Common myeloid progenitor, CD34-positive (primary cell): ENCODE measurements at regions of chr12 and their contacts with region 1.

Region 1: GRCh38 chr12:48890657-48891418 is 25.2 kb upstream of the RND1 start:
- DNase-seq: peak; percentile 60 to 73 (median 67)
- H3K4me3 ChIP-seq: peak overlapping the region in 2 of 7 experiments; percentile 22 to 50
- H3K27ac ChIP-seq: no peak overlapping the region
- H3K4me1 ChIP-seq: peaks cover 0 to 7% (median 2%) of the 10 kb centered on the region in 4 experiments
- H3K27me3 ChIP-seq: peaks cover 3 to 18% (median 5%) of the 10 kb centered on the region in 5 experiments

Region 2: DNA sequence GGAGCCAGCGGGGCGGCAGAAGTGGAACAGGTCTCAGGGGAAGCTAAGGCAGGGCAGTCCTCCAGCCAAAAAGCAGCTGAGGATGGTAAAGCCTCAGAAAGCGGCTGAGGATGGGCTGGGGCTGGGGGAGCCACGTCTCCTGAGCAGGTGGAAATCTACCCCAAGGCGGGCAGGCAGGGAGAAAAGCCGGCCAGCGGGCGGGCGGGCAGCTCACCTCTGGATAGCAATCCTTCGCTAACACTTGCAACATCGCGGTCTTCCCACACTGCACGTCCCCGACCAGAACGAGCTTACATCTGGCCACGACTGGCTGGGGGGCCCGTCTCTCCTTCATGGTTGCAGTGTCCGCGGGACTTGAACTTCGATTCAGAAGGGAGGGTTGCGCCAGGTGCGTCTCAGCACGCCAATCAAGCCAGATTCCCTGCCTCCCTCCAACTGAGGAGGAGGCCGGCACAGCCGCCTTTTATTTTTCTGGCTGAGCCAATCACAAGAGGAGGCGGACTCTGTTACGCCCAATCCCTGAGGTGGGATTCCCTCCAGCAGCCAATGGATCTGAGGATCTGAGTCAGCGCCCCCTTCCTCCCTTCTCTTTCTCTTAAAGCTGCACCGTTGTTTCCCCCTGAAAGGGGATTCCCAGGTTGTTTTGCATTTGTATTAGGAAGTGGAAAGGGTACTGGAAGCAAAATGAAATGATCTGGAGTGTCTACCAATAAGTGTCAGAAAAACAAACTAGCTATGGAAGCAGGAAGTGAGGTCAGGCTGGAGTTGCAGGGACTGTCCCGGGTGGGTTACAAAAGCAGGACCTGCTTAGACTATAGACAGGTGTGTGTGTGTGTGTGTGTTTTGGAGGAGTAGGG is 25.2 kb before region 1 on chr12 and contains the start of gene RND1:
- CTCF ChIA-PET with region 1: interaction called, 189 read pairs
- POLR2A ChIA-PET with region 1: interaction called, 3 read pairs
- DNase-seq: peak; percentile 92 to 94 (median 93)
- H3K4me3 ChIP-seq: peak within 1 kb of the TSS; percentile 23 to 81 (median 68)
- H3K27ac ChIP-seq: no peak within 1 kb of the TSS
- H3K4me1 ChIP-seq: peaks cover 0 to 29% (median 22%) of the 10 kb centered on the region in 4 experiments
- H3K27me3 ChIP-seq: peaks cover 0 to 18% (median 13%) of the 10 kb centered on the region in 5 experiments

Region 3: DNA sequence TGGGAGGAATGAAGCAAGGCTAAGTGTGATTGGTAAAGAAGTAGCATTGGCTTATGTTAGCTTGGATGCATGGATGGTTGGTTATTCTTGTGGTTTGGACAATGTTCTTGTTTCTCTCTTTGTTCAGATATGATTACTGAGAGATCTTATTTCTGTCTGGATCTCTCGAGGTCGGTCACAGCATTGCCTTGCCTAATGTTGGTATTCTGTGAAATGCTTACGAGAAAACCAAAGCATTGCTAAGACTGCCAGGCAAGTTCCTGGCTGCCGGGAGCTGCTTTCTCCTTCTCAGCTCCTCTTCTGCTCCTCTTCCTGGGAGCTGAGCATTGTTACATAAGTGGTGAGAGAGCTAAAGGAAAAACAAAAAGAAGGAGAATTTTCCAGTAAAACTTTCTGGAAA is 17.7 kb before region 1 on chr12:
- CTCF ChIA-PET with region 1: interaction called, 45 read pairs
- POLR2A ChIA-PET with region 1: interaction called, 3 read pairs
- DNase-seq: no peak
- H3K4me3 ChIP-seq: no peak overlapping the region
- H3K27ac ChIP-seq: no peak overlapping the region
- H3K4me1 ChIP-seq: no peaks in the 10 kb centered on the region
- H3K27me3 ChIP-seq: peaks cover 0 to 3% (median 0%) of the 10 kb centered on the region in 5 experiments

Region 4: DNA sequence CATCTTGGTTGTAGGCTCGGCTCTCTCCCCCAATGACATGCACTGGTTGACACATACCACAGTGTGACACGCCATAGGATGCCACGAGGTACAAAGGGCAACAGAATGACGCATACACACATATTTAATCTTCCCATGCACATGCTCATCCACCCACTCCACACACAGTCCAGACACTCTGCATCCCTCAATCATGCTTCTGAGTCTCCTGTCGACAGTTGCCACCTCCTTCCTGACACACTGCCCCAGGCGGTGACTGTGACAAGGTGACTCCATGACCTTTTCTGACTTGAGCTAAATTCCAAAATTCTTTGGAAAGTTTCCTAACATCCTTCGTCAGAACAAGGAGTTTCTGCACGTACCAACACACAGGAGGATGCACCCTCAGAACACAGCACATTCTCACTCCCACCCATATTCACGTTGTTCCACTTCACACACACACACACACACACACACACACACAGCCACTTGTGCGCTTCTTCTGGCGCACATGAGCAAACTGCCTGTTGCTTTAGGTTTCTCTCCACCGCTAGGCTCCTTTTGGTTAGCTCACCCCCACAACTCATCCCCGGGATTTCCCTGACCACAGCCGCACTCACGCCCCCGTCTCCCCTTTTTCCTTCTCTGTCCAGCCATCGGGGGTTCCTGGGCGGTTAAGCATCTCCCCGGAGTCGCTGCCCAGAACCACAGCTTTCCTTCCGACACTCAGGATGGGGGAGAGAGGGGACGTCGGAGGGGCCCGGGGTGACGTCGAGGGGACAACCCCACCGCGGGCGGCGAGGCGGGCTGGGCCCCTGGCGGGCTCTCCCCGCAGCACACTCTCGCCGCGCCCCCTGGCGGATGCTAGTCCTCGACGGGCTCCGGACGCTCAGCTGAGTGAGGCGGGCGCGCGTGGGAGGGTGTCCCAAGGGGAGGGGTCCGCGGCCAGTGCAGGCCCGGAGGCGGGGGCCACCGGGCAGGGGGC is 86.8 kb after region 1 on chr12:
- CTCF ChIA-PET with region 1: interaction called, 10 read pairs
- POLR2A ChIA-PET with region 1: no interaction called
- DNase-seq: peak; percentile 81 to 95 (median 94)
- H3K4me3 ChIP-seq: peak overlapping the region in 2 of 7 experiments; percentile 58 to 66
- H3K27ac ChIP-seq: no peak overlapping the region
- H3K4me1 ChIP-seq: peaks cover 0 to 57% (median 53%) of the 10 kb centered on the region in 4 experiments
- H3K27me3 ChIP-seq: peaks cover 4 to 97% (median 56%) of the 10 kb centered on the region in 5 experiments